ENCODE measurements at regions of chr2 and their contacts with region 1.

Region 1: GRCh38 chr2:26355038-26355995 is 8.7 kb upstream of the ADGRF3 start:
- DNase-seq: peak in 3 of 7 donors; percentile 35
- H3K4me3 ChIP-seq: no peak overlapping the region
- H3K27ac ChIP-seq: no peak overlapping the region
- H3K4me1 ChIP-seq: peaks cover 0 to 12% of the 10 kb centered on the region in 2 donors
- H3K27me3 ChIP-seq: no peaks in the 10 kb centered on the region
- CTCF ChIP-seq: no peak
- POLR2A ChIP-seq: peak in 1 of 2 donors; percentile 12

Region 2: DNA sequence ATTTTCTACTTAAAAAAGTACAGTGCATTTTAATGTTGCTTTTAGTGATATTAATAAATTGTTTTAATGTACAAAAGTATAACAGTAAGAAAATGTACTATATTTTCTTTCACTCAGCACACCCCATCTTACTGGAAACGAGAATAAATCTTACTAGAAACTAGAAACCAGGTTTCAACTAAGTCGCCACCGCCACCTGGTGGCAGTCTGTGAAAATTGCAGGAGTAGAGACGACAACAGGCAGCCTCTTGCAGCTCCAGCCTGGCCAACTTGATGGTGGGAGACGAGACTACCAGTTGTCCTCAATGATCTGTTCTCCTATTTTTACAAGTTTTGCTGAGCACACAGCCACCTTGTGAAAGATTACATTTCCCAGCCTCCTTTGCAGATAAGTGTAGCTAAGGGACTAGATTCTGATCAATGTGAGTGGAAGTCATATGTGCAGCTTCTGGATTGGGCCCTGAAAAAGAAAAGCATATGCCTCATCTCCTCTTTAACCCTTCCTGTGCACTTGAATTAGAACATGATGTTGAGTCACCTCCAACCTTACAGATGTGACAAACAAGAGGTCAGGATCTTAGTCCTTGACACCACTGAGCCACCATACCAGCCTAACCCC is 113.9 kb after region 1 on chr2:
- intact Hi-C with region 1: loop called in 1 of 2 experiments (anchors 10 kb)
- DNase-seq: peak in 2 of 7 donors; percentile 45 to 74
- H3K4me3 ChIP-seq: no peak overlapping the region
- H3K27ac ChIP-seq: no peak overlapping the region
- H3K4me1 ChIP-seq: no peaks in the 10 kb centered on the region
- H3K27me3 ChIP-seq: no peaks in the 10 kb centered on the region
- CTCF ChIP-seq: peak in 5 of 6 experiments; percentile 35 to 64 (median 60)
- POLR2A ChIP-seq: no peak

Region 3: GRCh38 chr2:26534098-26534864 is 179.0 kb after region 1 on chr2:
- intact Hi-C with region 1: no loop called
- DNase-seq: no peak
- H3K4me3 ChIP-seq: no peak overlapping the region
- H3K27ac ChIP-seq: no peak overlapping the region
- H3K4me1 ChIP-seq: no peaks in the 10 kb centered on the region
- H3K27me3 ChIP-seq: no peaks in the 10 kb centered on the region
- CTCF ChIP-seq: no peak
- POLR2A ChIP-seq: no peak